PC-9 (cell line): ENCODE measurements at regions of chr9 and their contacts with region 1.

Region 1: DNA sequence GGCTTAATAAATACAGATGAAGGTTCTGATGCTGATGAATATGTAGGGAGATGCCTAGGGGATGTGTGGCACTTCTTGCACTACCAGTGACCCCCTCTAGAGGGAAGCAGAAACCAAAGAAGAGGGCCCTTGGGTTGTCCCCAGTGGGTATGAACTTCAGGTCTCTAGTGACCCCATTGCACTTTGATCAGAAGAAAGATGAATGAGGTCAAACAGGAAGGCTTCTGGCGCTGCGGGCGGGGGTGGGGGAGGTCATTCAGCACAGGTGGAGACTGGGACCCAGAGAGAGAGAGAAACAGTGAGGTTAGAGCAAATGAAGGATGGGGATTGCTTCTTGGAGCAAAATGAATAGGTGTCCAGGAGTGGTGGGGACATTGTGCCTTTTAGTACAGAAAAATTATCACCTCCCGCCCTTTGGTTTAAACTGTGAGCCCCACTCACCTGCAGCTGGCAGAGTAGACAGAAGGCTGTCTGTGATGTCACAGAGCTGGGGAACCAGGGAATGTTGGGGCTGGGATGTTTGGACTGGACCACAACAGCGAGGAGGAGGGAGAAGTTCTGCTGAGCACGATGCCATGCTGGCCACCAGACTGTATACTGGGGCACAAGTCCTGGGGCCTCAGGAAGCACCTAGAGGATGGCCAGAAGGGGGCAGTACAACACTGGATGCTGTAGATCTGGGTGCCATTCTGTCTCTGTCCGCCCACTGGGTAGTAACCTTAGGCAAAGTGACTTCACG is at the start of gene TEX48:
- DNase-seq: peak; percentile 48 to 63
- H3K4me3 ChIP-seq: no peak within 1 kb of the TSS
- H3K27ac ChIP-seq: no peak within 1 kb of the TSS
- H3K4me1 ChIP-seq: peaks cover 23% of the 10 kb centered on the region
- H3K27me3 ChIP-seq: no peaks in the 10 kb centered on the region
- CTCF ChIP-seq: peak; percentile 82
- total RNA-seq, gene TEX48: not detected in 2 replicates

Region 2: DNA sequence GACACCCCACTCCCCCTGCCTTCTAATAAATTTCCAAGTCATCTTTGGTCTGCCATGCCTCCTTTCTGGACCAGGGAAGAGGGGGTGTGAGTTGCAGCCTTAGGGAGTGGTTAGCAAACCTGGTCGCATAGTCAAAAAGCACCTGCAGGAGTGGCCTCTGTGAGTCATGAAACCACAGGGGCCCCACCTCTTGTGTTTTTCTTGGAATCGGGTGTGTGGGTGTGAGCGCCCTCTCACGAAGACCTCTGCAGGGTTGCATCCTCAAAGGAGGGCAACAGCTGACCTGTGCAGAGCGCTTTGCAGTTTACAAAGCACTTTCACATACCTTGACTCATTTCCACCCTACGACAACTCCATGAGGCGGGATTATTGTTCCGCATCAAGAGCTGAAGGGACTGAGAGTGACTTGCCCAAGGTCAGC is 37.0 kb after region 1 on chr9:
- CTCF ChIA-PET with region 1: no interaction called
- POLR2A ChIA-PET with region 1: no interaction called
- intact Hi-C with region 1: loop called (anchors 5 kb)
- DNase-seq: peak; percentile 94 to 98
- H3K4me3 ChIP-seq: no peak overlapping the region
- H3K27ac ChIP-seq: peak overlapping the region; percentile 50
- H3K4me1 ChIP-seq: peaks cover 25% of the 10 kb centered on the region
- H3K27me3 ChIP-seq: no peaks in the 10 kb centered on the region
- CTCF ChIP-seq: no peak; the same call in 1 of the 2 replicates

Region 3: DNA sequence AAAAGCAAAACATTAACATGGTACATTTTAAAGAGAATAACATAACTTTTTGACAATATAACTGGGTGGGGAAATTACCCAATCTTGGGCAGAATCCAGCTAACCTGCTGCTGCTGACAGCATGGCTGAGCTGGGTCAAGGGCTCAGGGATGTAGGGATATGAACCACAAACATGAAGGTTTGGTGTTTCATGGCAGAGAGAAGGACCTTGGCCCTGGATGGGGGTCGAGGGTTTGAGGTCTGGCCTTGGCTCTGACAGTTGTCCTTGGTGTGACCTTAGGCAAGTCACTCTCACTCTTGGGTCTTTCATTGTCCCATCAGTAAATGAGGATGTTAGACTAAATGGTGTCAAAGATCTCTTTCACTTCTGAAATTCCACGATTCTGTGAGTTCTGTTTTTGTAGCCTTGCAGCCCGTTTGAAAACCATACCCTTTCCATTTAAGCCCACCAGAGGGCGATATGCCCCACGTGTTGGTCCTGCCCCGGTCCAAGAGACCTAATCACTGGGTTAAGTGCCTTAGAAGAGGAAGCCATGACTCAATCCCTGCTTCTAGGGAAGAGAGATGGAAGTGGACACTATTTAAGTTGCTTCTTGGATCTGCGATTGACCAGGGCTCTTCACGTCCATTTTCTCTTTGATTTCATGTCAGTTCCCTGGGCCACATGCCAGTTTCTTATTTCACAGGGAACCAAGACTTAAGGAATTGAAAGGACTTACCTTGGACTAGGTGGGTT is 57.0 kb after region 1 on chr9:
- CTCF ChIA-PET with region 1: interaction called, 3 read pairs
- POLR2A ChIA-PET with region 1: no interaction called
- intact Hi-C with region 1: loop called (anchors 1 kb)
- DNase-seq: peak; percentile 68 to 69
- H3K4me3 ChIP-seq: no peak overlapping the region
- H3K27ac ChIP-seq: no peak overlapping the region
- H3K4me1 ChIP-seq: peaks cover 19% of the 10 kb centered on the region
- H3K27me3 ChIP-seq: no peaks in the 10 kb centered on the region
- CTCF ChIP-seq: peak; percentile 92

Region 4: GRCh38 chr9:114805670-114806525 is 124.1 kb after region 1 on chr9 and contains the start of gene TNFSF15:
- CTCF ChIA-PET with region 1: interaction called, 6 read pairs
- POLR2A ChIA-PET with region 1: interaction called, 3 read pairs
- intact Hi-C with region 1: loop called (anchors 5 kb)
- DNase-seq: peak; percentile 82 to 88
- H3K4me3 ChIP-seq: peak within 1 kb of the TSS; percentile 42
- H3K27ac ChIP-seq: peak within 1 kb of the TSS; percentile 89
- H3K4me1 ChIP-seq: peaks cover 50% of the 10 kb centered on the region
- H3K27me3 ChIP-seq: no peaks in the 10 kb centered on the region
- CTCF ChIP-seq: no peak
- total RNA-seq, gene TNFSF15: 0.33 and 0.55 TPM in 2 replicates

Region 5: DNA sequence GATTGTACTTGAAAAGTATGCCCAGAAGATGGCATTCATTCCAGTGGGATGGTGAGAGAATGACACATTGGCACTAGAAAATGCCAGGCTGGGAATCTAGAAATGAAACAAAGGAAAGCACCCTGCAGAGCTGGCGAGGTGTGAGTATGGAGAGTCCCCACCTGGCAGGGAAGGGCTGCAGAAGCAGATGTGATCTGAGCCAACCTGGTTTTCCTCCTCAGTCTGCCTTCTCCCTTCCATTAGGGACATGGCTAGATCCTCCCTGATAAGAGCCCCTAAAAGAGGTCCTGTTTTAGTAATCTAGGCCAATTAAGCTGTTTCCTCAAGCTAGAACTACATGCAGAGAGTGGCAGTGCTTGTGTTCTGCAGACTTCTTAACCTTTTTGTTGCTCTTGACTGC is 148.8 kb after region 1 on chr9:
- CTCF ChIA-PET with region 1: no interaction called
- POLR2A ChIA-PET with region 1: no interaction called
- intact Hi-C with region 1: no loop called
- DNase-seq: no peak
- H3K4me3 ChIP-seq: no peak overlapping the region
- H3K27ac ChIP-seq: no peak overlapping the region
- H3K4me1 ChIP-seq: no peaks in the 10 kb centered on the region
- H3K27me3 ChIP-seq: 0 out of 2 replicates have a peak, but pooled peaks cover 6% of the 10 kb centered on the region
- CTCF ChIP-seq: no peak

Region 6: DNA sequence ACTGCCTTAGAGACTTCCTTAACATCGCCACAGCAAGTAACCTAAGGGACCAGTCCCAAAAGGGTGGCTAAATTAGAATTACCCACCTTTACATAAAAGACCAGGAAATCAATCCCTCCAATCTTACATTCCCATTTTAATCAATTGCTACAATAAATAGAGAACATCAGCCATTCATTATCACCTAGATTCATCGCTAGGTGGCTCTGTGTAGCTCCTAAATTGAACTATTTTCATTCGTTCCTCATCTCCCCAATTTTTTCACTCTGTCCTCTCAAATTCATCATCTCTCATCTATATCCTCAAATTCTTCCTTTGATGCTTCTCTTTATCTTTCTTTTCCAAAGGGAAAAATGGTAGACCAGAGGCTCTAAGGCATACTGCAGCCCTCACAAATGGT is 544.4 kb after region 1 on chr9:
- CTCF ChIA-PET with region 1: interaction called, 11 read pairs
- POLR2A ChIA-PET with region 1: no interaction called
- intact Hi-C with region 1: no loop called
- DNase-seq: no peak
- H3K4me3 ChIP-seq: no peak overlapping the region
- H3K27ac ChIP-seq: no peak overlapping the region
- H3K4me1 ChIP-seq: no peaks in the 10 kb centered on the region
- H3K27me3 ChIP-seq: no peaks in the 10 kb centered on the region
- CTCF ChIP-seq: peak; percentile 55

Region 7: DNA sequence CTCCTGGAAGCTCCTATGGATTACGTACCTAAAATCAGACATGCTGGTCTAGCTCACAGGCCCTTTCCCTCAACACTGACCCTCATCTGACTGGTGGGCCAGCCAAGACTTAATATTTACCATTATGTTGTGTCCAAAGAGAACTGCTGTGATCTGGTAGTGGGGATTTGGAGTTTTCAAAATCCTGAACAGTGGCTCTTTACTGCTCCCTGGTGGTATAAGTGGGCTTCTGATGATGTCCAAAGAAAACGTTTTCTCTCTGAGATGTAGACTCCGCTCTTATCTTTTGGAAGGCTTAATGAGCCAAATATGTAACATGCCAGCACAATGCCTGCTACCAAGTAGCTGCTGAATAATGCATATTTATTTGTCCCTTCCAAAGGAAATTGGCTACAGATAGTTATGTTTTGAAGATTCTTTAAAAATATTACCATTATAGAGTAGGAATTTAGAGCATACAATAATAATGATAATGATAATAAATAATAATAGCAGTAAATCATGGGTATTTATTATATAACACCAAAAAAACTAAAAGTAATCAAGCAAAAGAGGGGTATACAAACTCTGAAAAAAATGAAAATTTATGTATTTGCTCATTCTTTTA is 842.8 kb after region 1 on chr9:
- CTCF ChIA-PET with region 1: no interaction called
- POLR2A ChIA-PET with region 1: no interaction called
- intact Hi-C with region 1: loop called (anchors 5 kb)
- DNase-seq: peak; percentile 30 to 60
- H3K4me3 ChIP-seq: no peak overlapping the region
- H3K27ac ChIP-seq: no peak overlapping the region
- H3K4me1 ChIP-seq: no peaks in the 10 kb centered on the region
- H3K27me3 ChIP-seq: no peaks in the 10 kb centered on the region
- CTCF ChIP-seq: peak; percentile 84

Region 8: GRCh38 chr9:115883457-115884329 is 1201.9 kb after region 1 on chr9:
- CTCF ChIA-PET with region 1: no interaction called
- POLR2A ChIA-PET with region 1: no interaction called
- intact Hi-C with region 1: no loop called
- DNase-seq: peak; percentile 50 to 53
- H3K4me3 ChIP-seq: no peak overlapping the region
- H3K27ac ChIP-seq: no peak overlapping the region
- H3K4me1 ChIP-seq: peaks cover 5% of the 10 kb centered on the region
- H3K27me3 ChIP-seq: no peaks in the 10 kb centered on the region
- CTCF ChIP-seq: peak; percentile 78